ENCODE measurements at regions of chr1 and their contacts with region 1.

Region 1: DNA sequence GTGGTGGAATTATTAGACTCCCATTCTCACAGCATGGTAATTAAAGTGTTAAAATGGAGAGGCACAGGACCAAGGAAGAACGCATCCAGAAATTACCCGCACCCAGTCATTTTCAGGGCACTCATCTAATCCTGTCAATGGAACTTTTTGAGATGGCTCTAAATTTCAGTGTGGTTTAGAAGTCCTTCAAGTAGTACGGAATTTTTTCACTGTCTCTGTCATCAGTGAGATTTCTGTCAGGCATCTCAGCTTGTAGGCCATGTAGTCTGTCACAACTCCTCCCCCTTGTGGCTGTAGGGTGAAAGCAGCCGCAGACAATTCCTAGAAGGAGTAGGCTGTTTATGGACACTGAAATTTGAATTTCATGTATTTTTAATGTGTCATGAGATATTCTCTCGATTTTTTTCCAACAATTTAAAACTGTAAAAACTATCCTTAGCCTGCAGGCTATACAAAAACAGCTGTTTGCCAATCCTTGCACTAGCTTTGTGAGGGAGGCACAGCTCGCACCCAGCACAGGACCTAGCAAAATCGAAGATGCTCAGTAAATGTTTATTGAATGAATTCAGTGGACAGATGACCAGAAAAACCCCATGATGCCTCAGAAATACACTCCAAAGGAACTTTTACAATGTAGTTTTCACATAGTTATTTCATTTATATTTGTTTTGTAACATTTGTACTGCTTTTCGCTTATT is 6.6 kb upstream of the NUP133 start:
- DNase-seq: peak; percentile 60 to 81 (median 79)
- H3K4me3 ChIP-seq: no peak overlapping the region
- H3K27ac ChIP-seq: no peak overlapping the region
- H3K4me1 ChIP-seq: no peaks in the 10 kb centered on the region
- H3K27me3 ChIP-seq: no peaks in the 10 kb centered on the region

Region 2: DNA sequence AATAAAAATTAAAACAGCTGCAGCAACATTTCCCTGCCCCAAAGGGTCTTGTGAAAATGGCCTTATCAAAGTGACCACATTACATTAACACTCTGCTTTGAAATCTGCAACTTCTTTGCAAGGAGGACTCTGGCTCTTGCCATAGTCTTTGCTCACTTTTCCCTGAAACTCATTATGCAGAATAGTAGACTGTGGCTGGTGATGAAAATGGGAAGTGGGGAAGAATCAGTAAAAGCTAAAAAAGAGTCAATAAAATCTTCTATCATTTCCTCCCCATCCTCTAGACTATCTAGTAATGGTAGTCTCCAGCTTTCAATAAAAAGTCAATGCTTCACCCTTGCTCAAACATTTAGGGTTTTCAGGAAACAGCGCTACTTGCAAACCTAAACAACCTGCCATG is 12.0 kb after region 1 on chr1:
- CTCF ChIA-PET with region 1: interaction called, 10 read pairs
- POLR2A ChIA-PET with region 1: no interaction called
- DNase-seq: no peak
- H3K4me3 ChIP-seq: no peak overlapping the region
- H3K27ac ChIP-seq: no peak overlapping the region
- H3K4me1 ChIP-seq: no peaks in the 10 kb centered on the region
- H3K27me3 ChIP-seq: no peaks in the 10 kb centered on the region

Region 3: GRCh38 chr1:229596925-229597699 is 82.4 kb after region 1 on chr1:
- CTCF ChIA-PET with region 1: no interaction called
- POLR2A ChIA-PET with region 1: no interaction called
- DNase-seq: no peak
- H3K4me3 ChIP-seq: no peak overlapping the region
- H3K27ac ChIP-seq: no peak overlapping the region
- H3K4me1 ChIP-seq: peaks cover 0 to 5% (median 0%) of the 10 kb centered on the region in 4 experiments
- H3K27me3 ChIP-seq: no peaks in the 10 kb centered on the region

Measured in common myeloid progenitor, CD34-positive (primary cell).